ENCODE measurements at regions of chrX and their contacts with region 1.

Region 1: GRCh38 chrX:118855681-118856310 is 32.2 kb downstream of the ZCCHC12 start:
- DNase-seq: no peak
- H3K4me3 ChIP-seq: no peak overlapping the region
- H3K27ac ChIP-seq: no peak overlapping the region
- H3K4me1 ChIP-seq: no peaks in the 10 kb centered on the region
- H3K27me3 ChIP-seq: no peaks in the 10 kb centered on the region
- CTCF ChIP-seq: no peak
- POLR2A ChIP-seq: no peak

Region 2: DNA sequence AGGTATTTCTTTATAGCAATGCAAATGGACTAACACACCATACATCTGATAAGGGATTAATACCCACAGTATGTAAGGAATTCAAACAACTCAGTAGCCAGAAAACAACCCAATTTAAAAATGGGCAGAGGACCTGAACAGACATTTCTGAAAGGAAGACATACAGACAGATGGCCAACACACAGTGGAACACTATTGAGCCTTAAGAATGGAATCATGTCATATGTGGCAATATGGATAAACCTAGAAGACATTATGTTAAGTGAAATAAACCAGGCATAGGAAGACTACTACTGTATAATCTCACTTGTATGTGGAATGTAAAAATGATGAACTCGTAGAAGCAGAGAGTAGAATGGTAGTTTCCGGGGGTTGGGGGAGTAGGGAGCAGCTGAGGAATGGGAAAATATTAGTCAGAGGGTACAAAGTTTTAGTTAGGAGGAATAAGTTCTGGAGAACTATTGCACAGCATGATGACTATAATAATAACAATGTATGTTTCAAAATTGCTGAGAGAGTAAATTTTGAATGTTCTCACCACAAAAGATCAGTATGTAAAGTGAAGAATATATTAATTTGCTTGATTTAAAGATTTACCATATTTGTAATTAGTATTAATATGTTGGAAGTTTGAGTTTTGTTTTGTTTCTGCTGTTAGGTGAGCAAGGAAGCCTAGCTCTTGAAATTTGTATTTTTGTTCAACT is 484.7 kb before region 1 on chrX:
- intact Hi-C with region 1: no loop called
- DNase-seq: no peak
- H3K4me3 ChIP-seq: no peak overlapping the region
- H3K27ac ChIP-seq: no peak overlapping the region
- H3K4me1 ChIP-seq: no peaks in the 10 kb centered on the region
- H3K27me3 ChIP-seq: no peaks in the 10 kb centered on the region
- CTCF ChIP-seq: no peak
- POLR2A ChIP-seq: no peak

Region 3: DNA sequence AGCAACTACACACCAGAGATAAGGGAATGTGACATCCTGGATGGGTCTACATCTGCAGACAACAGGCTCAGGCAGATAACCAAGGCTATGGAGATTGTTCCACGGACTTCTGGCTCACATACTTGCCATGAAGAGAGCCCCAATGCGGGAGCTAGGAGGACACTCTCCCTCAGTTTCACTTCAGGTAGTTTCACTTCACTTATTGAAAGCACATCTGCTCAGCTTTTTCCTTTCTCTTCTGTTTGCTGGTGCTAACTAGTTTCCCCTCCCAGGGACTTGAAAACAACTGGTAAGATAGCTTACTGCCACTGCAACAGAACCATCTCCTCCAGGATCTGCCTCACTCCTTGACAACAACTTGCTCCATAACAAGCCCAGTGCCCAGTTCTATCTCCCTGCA is 215.6 kb after region 1 on chrX:
- intact Hi-C with region 1: loop called (anchors 5 kb)
- DNase-seq: no peak
- H3K4me3 ChIP-seq: no peak overlapping the region
- H3K27ac ChIP-seq: no peak overlapping the region
- H3K4me1 ChIP-seq: no peaks in the 10 kb centered on the region
- H3K27me3 ChIP-seq: no peaks in the 10 kb centered on the region
- CTCF ChIP-seq: no peak
- POLR2A ChIP-seq: no peak